Mammary epithelial cell (primary cell): ENCODE measurements at regions of chr11 and their contacts with region 1.

Region 1: DNA sequence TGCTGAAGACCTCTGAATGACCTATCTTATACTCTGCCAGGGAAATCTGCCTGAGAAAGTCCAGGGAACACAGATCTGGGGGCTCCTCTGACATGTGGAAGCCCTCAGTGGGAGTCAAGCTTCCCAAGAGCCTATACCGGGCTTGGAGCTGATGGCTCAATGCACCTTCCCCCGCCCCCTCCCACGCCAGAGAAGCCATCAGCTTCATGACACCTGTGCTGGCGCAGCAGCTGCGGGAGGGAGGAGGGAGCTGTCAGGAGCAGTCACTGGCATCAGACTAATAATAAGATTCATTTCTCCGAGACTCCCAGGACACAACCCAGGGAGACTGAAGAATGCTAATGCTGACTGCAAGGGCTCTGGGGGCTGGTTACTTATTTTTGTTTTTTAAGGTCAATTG is 47.8 kb downstream of the SPATA19 start:
- DNase-seq: no peak
- H3K4me3 ChIP-seq: no peak overlapping the region
- H3K27ac ChIP-seq: no peak overlapping the region
- H3K4me1 ChIP-seq: no peaks in the 10 kb centered on the region
- H3K27me3 ChIP-seq: peaks cover 1% of the 10 kb centered on the region
- CTCF ChIP-seq: no peak

Region 2: GRCh38 chr11:133742353-133742752 is 55.2 kb before region 1 on chr11:
- CTCF ChIA-PET with region 1: no interaction called
- dilution Hi-C with region 1: loop called (anchors 5 kb)
- in situ Hi-C with region 1: no loop called
- intact Hi-C with region 1: no loop called
- DNase-seq: no peak
- H3K4me3 ChIP-seq: no peak overlapping the region
- H3K27ac ChIP-seq: no peak overlapping the region
- H3K4me1 ChIP-seq: no peaks in the 10 kb centered on the region
- H3K27me3 ChIP-seq: no peaks in the 10 kb centered on the region
- CTCF ChIP-seq: no peak